Naive thymus-derived CD4-positive, alpha-beta T cell (primary cell): ENCODE measurements at regions of chr22 and their contacts with region 1.

Region 1: GRCh38 chr22:20156611-20157429 is 6.0 kb upstream of the CCDC188 start:
- DNase-seq: peak; percentile 70 to 92 (median 80)
- ATAC-seq: peak; percentile 89
- H3K4me3 ChIP-seq: no peak overlapping the region
- H3K4me3 Mint-ChIP-seq: no peak overlapping the region
- H3K27ac ChIP-seq: no peak overlapping the region
- H3K27ac Mint-ChIP-seq: no peak overlapping the region
- H3K4me1 ChIP-seq: no peaks in the 10 kb centered on the region
- H3K4me1 Mint-ChIP-seq: peaks cover 0 to 4% (median 0%) of the 10 kb centered on the region in 7 donors
- H3K27me3 ChIP-seq: no peaks in the 10 kb centered on the region
- H3K27me3 Mint-ChIP-seq: peaks cover 0 to 7% (median 0%) of the 10 kb centered on the region in 5 donors

Region 2: GRCh38 chr22:19607192-19608002 is 549.4 kb before region 1 on chr22:
- CTCF ChIA-PET with region 1: no interaction called
- POLR2A ChIA-PET with region 1: no interaction called
- intact Hi-C with region 1: no loop called
- DNase-seq: peak in 8 of 9 donors; percentile 40 to 85 (median 78)
- ATAC-seq: peak; percentile 93
- H3K4me3 ChIP-seq: no peak overlapping the region
- H3K4me3 Mint-ChIP-seq: peak overlapping the region; percentile 66 to 77 (median 69)
- H3K27ac ChIP-seq: peak overlapping the region; percentile 72
- H3K27ac Mint-ChIP-seq: peak overlapping the region; percentile 89 to 96 (median 94)
- H3K4me1 ChIP-seq: peaks cover 0 to 54% of the 10 kb centered on the region in 2 donors
- H3K4me1 Mint-ChIP-seq: peaks cover 28 to 82% (median 63%) of the 10 kb centered on the region in 7 donors
- H3K27me3 ChIP-seq: no peaks in the 10 kb centered on the region
- H3K27me3 Mint-ChIP-seq: no peaks in the 10 kb centered on the region

Region 3: DNA sequence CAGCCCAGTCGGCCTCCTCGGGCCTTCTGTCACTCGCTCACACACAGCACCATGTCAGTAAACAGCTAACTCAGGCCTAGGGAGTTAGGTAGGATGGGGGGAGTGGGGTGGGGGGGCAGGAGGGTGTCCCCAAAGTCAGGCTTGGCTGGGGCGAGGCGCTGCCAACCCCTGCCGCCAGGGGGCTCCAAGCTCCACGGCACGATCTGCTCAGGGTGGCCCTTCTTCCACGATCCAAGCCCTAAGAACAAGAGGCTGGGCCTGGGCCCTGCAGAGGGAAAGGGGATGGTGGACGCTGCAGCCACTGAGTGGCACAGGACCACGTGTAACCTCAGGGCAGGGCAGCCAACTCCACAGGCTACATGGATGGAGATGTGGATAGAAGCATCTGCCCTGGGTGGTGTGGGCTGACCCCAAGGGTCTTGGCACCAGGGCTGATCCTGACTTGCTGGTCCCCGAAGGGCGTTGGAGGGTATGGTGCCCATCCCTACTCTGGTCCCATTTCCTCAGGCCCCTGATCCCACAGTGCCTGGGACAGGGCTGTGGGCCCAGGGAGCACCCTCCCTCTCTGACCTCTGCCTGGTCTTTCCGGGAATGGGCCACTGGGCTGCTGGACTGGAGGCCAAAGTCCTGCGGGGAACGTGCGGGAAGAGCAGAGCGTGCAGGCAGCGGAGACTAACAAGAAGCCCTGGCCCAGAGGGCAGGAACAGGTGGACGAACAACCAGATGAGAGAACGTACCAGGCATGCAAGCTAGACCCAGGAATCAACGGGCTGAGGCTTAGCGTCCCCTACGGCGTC is 186.1 kb before region 1 on chr22:
- CTCF ChIA-PET with region 1: no interaction called
- POLR2A ChIA-PET with region 1: no interaction called
- intact Hi-C with region 1: loop called in 1 of 2 experiments (anchors 1 kb)
- DNase-seq: peak; percentile 59 to 83 (median 73)
- ATAC-seq: peak; percentile 81
- H3K4me3 ChIP-seq: no peak overlapping the region
- H3K4me3 Mint-ChIP-seq: peak overlapping the region in 1 of 10 donors; percentile 52
- H3K27ac ChIP-seq: no peak overlapping the region
- H3K27ac Mint-ChIP-seq: peak overlapping the region in 2 of 9 donors; percentile 41
- H3K4me1 ChIP-seq: peaks cover 7 to 11% of the 10 kb centered on the region in 2 donors
- H3K4me1 Mint-ChIP-seq: peaks cover 12 to 35% (median 13%) of the 10 kb centered on the region in 7 donors
- H3K27me3 ChIP-seq: no peaks in the 10 kb centered on the region
- H3K27me3 Mint-ChIP-seq: no peaks in the 10 kb centered on the region

Region 4: DNA sequence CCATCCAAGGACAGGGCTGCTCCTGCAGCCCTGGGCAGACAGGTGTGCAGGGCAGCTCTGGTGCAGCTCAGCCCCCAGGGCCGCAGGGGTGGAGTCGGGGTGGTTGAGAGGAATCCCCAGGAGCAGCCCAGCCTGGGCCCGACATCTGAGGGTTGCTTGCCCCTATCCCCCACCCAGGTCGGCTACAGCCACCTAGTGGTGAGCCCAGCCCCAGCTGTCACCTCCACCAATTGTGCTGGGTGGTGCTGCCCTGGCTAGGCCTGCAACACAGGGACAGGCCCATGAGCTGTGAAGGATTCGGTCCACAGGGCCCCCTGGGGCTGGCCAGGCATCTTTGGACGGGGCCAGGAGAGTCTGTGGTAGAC is 81.7 kb after region 1 on chr22:
- CTCF ChIA-PET with region 1: interaction called, 4 read pairs
- POLR2A ChIA-PET with region 1: no interaction called
- intact Hi-C with region 1: loop called (anchors 1 kb)
- DNase-seq: peak in 7 of 9 donors; percentile 28 to 50 (median 38)
- ATAC-seq: peak; percentile 64
- H3K4me3 ChIP-seq: no peak overlapping the region
- H3K4me3 Mint-ChIP-seq: peak overlapping the region in 8 of 10 donors; percentile 29 to 54 (median 40)
- H3K27ac ChIP-seq: peak overlapping the region; percentile 49
- H3K27ac Mint-ChIP-seq: peak overlapping the region; percentile 36 to 87 (median 79)
- H3K4me1 ChIP-seq: peaks cover 31 to 59% of the 10 kb centered on the region in 2 donors
- H3K4me1 Mint-ChIP-seq: peaks cover 8 to 47% (median 14%) of the 10 kb centered on the region in 7 donors
- H3K27me3 ChIP-seq: no peaks in the 10 kb centered on the region
- H3K27me3 Mint-ChIP-seq: no peaks in the 10 kb centered on the region

Region 5: GRCh38 chr22:20268279-20269012 is 111.6 kb after region 1 on chr22 and contains the start of gene RTN4R:
- CTCF ChIA-PET with region 1: no interaction called
- POLR2A ChIA-PET with region 1: no interaction called
- intact Hi-C with region 1: loop called (anchors 1 kb)
- DNase-seq: peak in 7 of 9 donors; percentile 41 to 73 (median 52)
- ATAC-seq: peak; percentile 84
- H3K4me3 ChIP-seq: no peak within 1 kb of the TSS
- H3K4me3 Mint-ChIP-seq: peak within 1 kb of the TSS; percentile 47 to 79 (median 74)
- H3K27ac ChIP-seq: peak within 1 kb of the TSS; percentile 8
- H3K27ac Mint-ChIP-seq: peak within 1 kb of the TSS in 1 of 9 donors; percentile 69
- H3K4me1 ChIP-seq: peaks cover 0 to 4% of the 10 kb centered on the region in 2 donors
- H3K4me1 Mint-ChIP-seq: peaks cover 0 to 7% (median 5%) of the 10 kb centered on the region in 7 donors
- H3K27me3 ChIP-seq: no peaks in the 10 kb centered on the region
- H3K27me3 Mint-ChIP-seq: peaks cover 0 to 6% (median 0%) of the 10 kb centered on the region in 5 donors
- total RNA-seq, gene RTN4R: 0.98 to 2.7 (median 1.8) TPM

Region 6: DNA sequence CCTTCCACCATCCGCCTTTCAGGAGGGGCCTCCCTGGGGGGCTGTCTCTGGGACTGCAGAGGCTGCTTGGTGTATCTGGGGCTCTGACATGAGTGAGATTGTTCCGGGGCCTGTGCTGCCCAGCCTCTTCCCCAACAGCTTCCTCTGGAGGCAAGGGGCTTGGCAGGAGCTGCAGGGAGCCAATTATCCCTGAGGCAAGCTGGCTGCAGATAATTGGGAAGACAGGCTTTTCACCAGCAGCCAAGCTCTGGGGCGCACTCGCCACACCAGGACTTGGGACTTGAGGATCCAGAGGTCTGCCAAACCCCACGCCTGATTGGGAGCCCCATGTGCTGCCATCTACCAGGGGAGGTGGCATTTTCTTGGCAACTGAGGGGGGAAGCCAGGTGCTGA is 126.8 kb after region 1 on chr22:
- CTCF ChIA-PET with region 1: interaction called, 7 read pairs
- POLR2A ChIA-PET with region 1: no interaction called
- intact Hi-C with region 1: loop called in 1 of 2 experiments (anchors 1 kb)
- DNase-seq: no peak
- ATAC-seq: no peak
- H3K4me3 ChIP-seq: no peak overlapping the region
- H3K4me3 Mint-ChIP-seq: no peak overlapping the region
- H3K27ac ChIP-seq: no peak overlapping the region
- H3K27ac Mint-ChIP-seq: no peak overlapping the region
- H3K4me1 ChIP-seq: no peaks in the 10 kb centered on the region
- H3K4me1 Mint-ChIP-seq: no peaks in the 10 kb centered on the region
- H3K27me3 ChIP-seq: no peaks in the 10 kb centered on the region
- H3K27me3 Mint-ChIP-seq: no peaks in the 10 kb centered on the region

Region 7: DNA sequence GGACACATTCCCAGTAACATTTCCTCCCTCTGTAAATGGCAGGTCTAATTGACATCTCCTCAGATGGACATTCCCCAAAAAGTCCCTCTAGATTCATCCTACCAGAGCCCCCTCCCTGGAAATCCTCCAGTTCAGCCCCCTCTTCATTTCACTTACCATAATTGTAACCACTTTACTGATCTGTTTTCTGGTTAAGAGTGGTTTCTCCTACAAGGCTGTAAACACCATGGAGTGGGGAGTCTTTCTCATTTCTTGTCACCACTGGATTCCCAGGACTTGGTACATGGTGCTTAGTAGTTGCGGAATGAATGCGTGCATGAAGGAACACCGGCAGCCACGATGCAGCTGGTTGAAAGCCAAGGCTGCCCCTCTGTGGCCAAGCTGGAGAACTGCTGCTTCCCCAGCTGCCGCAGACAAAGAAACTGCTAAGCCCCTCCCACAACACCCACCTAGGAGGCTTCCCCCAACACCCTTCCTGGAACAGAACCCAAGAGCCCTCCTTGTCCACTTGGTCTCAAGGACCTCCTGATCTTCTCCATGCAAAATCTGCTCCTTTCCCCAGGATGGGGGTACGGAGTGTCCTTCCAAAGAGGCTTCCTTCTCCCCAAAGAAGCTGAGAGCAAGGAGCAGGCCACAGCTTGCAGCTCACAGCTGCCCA is 299.4 kb after region 1 on chr22:
- CTCF ChIA-PET with region 1: no interaction called
- POLR2A ChIA-PET with region 1: no interaction called
- intact Hi-C with region 1: loop called in 1 of 2 experiments (anchors 5 kb)
- DNase-seq: peak; percentile 54 to 82 (median 72)
- ATAC-seq: peak; percentile 98
- H3K4me3 ChIP-seq: no peak overlapping the region
- H3K4me3 Mint-ChIP-seq: peak overlapping the region in 4 of 10 donors; percentile 20 to 36 (median 26)
- H3K27ac ChIP-seq: no peak overlapping the region
- H3K27ac Mint-ChIP-seq: peak overlapping the region in 5 of 9 donors; percentile 25 to 75 (median 51)
- H3K4me1 ChIP-seq: peaks cover 8 to 16% of the 10 kb centered on the region in 2 donors
- H3K4me1 Mint-ChIP-seq: peaks cover 13 to 40% (median 34%) of the 10 kb centered on the region in 7 donors
- H3K27me3 ChIP-seq: no peaks in the 10 kb centered on the region
- H3K27me3 Mint-ChIP-seq: no peaks in the 10 kb centered on the region